AG04449 (cell line): ENCODE measurements at regions of chr17 and their contacts with region 1.

Region 1: DNA sequence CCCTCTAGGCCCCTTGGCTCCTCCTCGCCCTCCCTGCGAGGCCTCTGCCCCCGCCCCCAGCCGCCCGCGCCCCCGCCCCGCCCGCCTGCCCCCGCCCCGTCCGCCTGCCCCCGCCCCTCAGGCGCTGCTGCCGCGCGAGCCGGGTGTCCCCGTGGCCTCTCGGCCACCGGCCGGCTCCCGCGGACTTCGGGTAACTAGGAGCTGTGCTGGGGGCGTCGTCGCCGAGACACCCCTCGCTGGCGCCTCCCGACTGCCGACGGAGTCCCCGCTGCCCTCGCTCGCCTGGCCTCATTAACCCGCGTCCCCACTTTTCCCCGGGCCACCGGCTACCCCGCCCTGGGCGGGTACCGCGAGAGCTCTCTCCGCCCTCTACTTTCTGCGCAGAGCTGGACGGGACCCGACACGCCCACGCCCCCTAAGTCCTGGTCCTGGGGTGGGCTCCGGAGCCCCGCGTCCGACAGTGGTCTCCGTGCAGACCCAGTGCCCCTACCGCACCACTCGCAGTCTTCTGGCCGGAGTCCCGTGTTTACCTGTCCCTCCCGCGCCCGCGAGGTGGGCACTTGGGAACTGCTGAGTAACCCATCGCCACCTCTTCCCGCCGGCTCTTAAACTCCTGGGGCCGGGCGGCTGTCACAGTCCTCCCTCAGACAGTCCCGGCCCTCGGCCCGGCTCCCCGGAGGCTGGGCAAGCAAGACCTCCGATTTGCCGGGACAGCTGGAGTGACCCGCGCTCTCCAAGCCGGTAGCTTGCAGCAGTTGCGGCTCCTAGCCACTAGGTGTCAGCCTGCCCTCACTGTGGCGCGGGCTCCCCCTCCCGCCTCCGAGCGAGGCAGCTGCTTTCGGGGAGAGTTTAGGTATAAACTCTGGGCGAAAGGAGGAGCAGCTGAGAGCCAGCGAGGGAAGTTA is at the start of gene TLCD1:
- DNase-seq: no peak
- H3K4me3 ChIP-seq: peak within 1 kb of the TSS; percentile 72
- CTCF ChIP-seq: peak; percentile 100

Region 2: GRCh38 chr17:28755486-28755885 is 29.0 kb after region 1 on chr17:
- CTCF ChIA-PET with region 1: interaction called, 603 read pairs
- POLR2A ChIA-PET with region 1: interaction called, 174 read pairs
- DNase-seq: no peak
- H3K4me3 ChIP-seq: no peak overlapping the region
- CTCF ChIP-seq: no peak

Region 3: GRCh38 chr17:28885363-28885762 is 158.9 kb after region 1 on chr17:
- CTCF ChIA-PET with region 1: no interaction called
- POLR2A ChIA-PET with region 1: no interaction called
- DNase-seq: no peak
- H3K4me3 ChIP-seq: no peak overlapping the region
- CTCF ChIP-seq: no peak

Region 4: GRCh38 chr17:28896884-28897768 is 170.6 kb after region 1 on chr17 and contains the start of gene FLOT2:
- CTCF ChIA-PET with region 1: interaction called, 13 read pairs
- POLR2A ChIA-PET with region 1: interaction called, 5 read pairs
- DNase-seq: no peak
- H3K4me3 ChIP-seq: peak within 1 kb of the TSS; percentile 85
- CTCF ChIP-seq: peak; percentile 46

Region 5: DNA sequence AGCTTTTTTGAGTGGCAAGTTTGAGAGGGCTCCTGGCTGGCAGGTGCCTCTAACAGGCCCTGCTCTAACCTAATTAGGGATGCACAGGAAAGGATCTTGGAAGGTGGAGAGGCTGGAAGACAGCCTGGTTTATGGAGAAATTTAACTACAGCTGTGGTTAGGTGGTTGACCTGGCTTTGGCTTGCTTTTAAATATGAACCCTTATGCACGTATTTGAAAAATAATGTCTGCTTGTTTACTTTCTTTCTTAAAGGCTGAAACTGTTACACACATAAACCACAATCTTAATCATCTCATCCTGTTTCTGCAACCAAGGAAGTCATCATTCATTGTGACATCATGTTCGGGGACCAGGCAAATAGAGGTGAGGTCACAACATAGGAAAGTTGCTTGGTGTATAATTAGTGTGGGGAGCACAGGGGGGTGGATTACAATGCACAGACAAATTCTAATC is 199.5 kb after region 1 on chr17:
- CTCF ChIA-PET with region 1: interaction called, 22 read pairs
- POLR2A ChIA-PET with region 1: no interaction called
- DNase-seq: peak; percentile 49
- H3K4me3 ChIP-seq: no peak overlapping the region
- CTCF ChIP-seq: no peak

Region 6: GRCh38 chr17:28967221-28968140 is 241.0 kb after region 1 on chr17:
- CTCF ChIA-PET with region 1: interaction called, 16 read pairs
- POLR2A ChIA-PET with region 1: no interaction called
- DNase-seq: no peak
- H3K4me3 ChIP-seq: no peak overlapping the region
- CTCF ChIP-seq: no peak